Posterior vena cava (tissue), 2 donors: ENCODE measurements at regions of chr2 and their contacts with region 1.

Region 1: DNA sequence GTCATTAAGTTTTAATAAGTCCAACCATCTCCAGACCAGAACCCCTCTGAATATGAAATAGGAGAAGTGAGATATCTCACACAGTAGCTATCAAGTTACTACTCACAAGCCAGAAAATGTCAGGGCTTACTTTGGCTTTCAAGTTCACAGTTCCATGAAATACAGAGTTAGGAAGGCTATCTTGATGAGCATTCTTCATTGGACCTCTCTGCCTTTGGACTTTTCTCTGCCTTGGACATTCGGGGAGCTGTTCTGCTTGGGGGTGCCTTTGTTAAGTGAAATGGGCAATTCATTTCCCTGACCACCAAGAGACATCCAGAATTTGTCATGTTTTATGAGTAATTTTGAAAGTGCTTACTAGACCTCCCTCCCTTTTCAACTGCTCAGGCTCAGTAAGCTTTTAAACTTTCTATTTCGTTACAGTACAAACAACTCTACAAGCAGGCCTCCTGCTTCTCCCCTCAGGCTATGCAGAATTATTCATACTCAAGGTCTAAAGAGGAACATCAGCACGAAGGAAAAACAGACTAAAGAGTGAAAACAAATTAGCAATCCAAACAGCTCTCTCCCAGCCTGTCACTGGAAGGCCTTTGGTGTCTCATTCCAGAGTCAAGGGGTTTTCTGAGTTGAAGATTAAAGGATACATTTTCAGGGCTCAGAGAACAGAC is 95.3 kb downstream of the MREG start:
- DNase-seq: no peak

Region 2: GRCh38 chr2:215442404-215442794 is 475.7 kb before region 1 on chr2:
- intact Hi-C with region 1: loop called in 1 of 2 experiments (anchors 10 kb)
- DNase-seq: no peak

Region 3: GRCh38 chr2:215454519-215455246 is 463.4 kb before region 1 on chr2:
- intact Hi-C with region 1: loop called (anchors 2 to 10 kb)
- DNase-seq: no peak

Region 4: DNA sequence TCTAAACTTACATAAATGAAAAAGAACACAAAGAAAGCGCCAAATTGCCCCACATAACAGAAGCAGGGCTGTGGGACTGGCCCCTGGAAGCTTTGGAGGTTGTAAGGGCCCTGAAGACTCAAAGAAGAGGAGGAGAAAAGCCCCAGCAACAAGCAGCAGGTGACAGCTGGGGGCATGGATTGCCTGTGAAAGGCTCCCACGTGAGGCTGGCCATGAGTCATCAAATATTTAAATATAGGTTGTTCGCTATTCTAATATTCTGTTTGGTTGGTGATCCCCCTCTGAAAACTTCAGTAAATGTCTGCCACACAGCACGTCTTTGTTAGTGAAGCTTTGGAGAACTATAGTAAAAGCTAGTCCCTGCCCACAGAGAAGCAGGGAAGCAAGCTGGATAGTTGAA is 37.1 kb before region 1 on chr2:
- intact Hi-C with region 1: no loop called
- DNase-seq: no peak

Region 5: GRCh38 chr2:215940645-215941184 is 22.6 kb after region 1 on chr2:
- intact Hi-C with region 1: no loop called
- DNase-seq: no peak